Mammary epithelial cell (primary cell): ENCODE measurements at regions of chr6 and their contacts with region 1.

Region 1: DNA sequence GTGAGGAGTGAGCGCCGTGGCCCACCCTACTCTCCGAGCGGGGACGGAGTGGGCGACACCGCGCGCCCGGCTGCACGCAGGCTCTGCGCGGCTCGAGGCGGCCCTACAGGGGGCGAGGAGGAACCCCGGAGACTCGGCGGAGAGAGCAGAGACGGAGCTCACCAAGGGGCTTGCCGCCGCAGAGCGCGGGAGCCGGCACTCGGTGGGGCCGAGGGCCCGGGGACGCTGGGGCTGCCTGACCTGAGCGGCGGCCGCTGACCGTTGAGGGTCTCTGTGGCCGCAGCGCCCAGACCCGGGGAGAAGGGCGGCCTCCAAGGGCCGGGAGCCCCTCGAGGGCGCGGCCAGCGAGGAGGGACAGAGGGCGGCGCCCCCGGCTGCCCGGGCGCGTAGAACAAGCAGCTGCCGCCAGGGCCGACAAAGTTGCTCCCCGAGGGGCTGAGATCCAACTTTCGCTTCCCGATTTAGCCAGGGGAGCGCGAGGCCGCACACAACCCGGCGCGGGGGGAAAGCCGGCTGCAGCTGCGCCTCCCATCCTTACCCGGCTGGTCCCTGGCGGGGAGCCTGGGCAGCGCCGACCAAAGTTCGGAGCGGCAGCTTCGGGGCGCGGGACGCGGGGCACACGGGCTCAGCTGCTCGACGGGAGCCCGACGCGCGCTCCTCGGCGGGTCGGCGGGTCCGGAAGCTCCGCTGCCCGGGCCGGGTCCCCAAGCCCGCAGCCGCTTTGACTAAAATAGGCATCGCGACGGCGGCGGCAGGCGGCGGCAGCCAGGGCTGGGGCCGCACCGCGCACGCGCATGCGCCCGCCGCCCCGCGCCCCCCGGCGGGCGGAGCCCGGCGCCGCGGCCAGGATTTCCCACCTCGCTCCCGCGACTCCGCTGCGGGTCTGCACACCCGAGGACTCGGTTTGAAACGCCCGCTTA is 43.1 kb downstream of the POPDC3 start:
- DNase-seq: peak; percentile 55
- H3K4me3 ChIP-seq: peak overlapping the region; percentile 85 to 98 (median 93)
- H3K27ac ChIP-seq: peak overlapping the region; percentile 53
- H3K4me1 ChIP-seq: peaks cover 7% of the 10 kb centered on the region
- H3K27me3 ChIP-seq: no peaks in the 10 kb centered on the region
- CTCF ChIP-seq: peak; percentile 5 to 30

Region 2: DNA sequence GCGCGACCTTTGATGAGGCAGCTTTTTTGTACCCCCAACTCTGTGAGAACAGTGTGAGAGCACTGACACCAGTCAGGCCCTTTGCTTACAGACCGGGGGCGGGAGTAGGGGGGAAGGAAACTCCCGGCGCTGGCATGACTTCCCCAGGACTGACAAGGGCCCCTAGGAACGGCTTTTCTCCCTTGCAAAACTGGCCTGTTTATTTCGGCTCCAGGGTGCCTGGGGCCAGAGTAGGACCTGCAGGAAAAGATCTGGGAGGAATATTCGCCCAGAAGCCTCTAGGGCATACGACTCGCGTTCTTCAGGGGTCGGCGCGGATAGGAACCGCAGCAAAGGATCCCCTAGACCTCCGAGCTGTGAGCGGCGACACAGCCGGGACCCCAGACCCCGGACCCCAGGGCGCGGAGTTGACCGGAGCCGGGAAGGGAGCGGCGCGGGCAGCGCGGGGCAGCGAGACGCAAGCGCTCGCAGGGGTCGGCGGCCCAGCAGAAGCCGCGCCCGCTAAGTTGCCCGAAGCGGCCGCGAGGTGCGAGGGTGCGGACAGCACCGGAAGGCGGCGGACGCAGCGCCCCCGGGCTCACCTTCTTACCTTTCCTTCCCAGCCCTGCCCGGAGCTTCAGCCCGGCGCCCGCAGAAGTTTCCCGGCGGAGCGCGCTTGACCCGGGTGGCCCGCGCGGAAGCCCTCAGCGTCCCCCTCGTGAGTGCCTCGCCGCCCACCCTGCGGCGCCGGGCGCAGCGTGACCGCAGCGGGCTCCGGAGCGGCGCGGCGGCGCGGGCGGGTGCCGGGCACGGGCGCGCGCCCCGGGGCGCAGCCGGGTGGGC is 42.8 kb after region 1 on chr6 and contains the start of gene POPDC3:
- CTCF ChIA-PET with region 1: no interaction called
- dilution Hi-C with region 1: no loop called
- in situ Hi-C with region 1: no loop called
- intact Hi-C with region 1: loop called (anchors 2 kb)
- DNase-seq: peak; percentile 57
- H3K4me3 ChIP-seq: peak within 1 kb of the TSS; percentile 57 to 76 (median 68)
- H3K27ac ChIP-seq: peak within 1 kb of the TSS; percentile 87
- H3K4me1 ChIP-seq: peaks cover 10% of the 10 kb centered on the region
- H3K27me3 ChIP-seq: no peaks in the 10 kb centered on the region
- CTCF ChIP-seq: no peak
- total RNA-seq, gene POPDC3: 14.4 to 34.0 TPM

Region 3: DNA sequence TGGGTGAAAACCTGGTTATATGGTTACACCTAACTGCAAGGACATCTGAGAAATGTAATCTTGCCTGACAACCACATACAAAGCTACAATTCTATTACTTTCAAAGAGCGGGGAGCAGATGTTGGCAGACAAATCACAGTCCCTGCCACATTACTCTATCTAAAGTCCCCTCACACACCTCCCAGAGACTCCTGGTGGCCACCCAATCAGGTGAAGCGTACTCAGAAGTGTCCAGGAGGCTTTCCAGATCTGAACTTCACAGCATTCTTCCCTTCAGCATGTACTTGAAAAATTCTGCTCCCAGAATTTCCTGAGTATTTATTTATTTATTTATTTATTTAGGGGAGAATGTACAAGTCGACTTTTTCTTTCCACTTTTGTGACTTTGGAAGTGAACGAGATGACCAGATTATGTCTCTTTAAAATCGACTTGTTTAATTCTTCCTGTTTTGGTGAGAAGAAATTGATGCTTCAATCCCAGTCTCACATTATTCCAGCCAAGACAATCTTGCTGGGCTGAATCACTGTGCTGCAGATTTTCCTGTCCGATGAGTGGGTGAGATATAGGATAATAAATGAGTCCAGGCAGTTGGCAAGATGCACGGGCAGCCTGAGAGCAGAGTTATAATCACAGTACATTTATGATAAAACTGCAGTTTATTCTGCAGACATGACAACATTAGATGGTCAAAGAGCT is 90.1 kb after region 1 on chr6:
- CTCF ChIA-PET with region 1: no interaction called
- dilution Hi-C with region 1: no loop called
- in situ Hi-C with region 1: no loop called
- intact Hi-C with region 1: no loop called
- DNase-seq: no peak
- H3K4me3 ChIP-seq: no peak overlapping the region
- H3K27ac ChIP-seq: no peak overlapping the region
- H3K4me1 ChIP-seq: no peaks in the 10 kb centered on the region
- H3K27me3 ChIP-seq: no peaks in the 10 kb centered on the region
- CTCF ChIP-seq: no peak

Region 4: DNA sequence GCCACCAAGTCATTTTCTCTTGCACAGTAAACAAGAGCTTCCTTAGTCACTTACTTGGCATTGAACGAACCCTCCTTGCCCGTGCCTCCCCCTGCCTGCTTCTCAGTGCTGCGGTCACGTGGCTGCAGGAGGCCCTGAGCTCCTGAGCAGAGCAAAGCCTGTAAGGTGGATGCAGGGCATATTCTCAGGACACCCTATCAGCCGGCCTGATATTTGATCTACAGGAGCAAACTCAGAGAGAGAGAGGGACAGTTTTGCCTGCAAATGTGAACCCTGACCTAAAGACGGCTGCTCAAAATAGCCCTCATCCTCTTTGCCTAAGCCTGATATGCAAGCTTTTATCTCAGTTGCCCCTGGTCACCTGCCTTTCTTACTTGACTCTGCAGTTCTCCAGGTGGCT is 136.1 kb after region 1 on chr6:
- CTCF ChIA-PET with region 1: no interaction called
- dilution Hi-C with region 1: no loop called
- in situ Hi-C with region 1: no loop called
- intact Hi-C with region 1: loop called (anchors 1 kb)
- DNase-seq: no peak
- H3K4me3 ChIP-seq: no peak overlapping the region
- H3K27ac ChIP-seq: no peak overlapping the region
- H3K4me1 ChIP-seq: no peaks in the 10 kb centered on the region
- H3K27me3 ChIP-seq: no peaks in the 10 kb centered on the region
- CTCF ChIP-seq: no peak

Region 5: DNA sequence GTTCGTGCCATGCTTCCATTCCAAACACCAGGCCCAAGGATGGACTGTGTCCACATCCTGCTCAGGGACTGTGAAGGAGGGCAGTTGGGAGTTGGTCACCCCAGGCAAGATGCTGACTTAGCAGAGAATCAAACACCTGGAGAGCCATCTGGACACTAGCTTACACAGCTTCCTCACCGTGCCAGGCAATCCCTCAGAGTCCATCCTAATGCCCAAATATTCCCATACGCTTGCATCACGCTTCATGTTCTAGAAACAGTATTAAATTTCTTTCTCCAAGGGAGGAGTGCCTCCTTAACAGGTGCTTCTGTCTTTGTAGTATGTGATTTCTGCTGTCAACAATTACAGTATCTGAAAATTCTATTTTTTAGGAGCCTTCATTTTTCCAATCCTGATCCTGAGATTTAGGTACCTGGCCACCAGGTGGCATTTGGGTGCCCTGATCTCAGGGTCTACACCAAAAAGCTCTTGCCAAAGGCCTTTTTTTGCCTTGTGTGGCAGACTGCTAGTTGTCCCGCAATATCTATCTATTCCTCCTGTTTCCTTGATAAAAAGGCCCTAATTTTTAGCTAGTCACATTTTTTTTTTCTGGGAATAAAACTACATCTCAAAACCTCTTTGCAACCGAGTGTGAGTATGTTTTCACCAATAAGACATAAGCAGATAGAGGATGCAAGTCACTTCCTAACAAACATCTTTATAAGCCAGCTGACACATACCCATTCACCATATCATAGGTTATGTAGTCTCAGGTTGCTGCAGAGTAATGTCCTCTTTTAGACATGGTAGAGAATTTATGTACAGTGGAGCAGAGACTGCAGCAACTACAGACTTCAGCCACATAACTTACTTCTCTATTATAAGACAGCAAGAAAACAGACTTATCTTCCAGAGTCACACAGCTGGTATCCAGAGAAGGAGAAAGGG is 181.2 kb after region 1 on chr6:
- CTCF ChIA-PET with region 1: no interaction called
- dilution Hi-C with region 1: no loop called
- in situ Hi-C with region 1: no loop called
- intact Hi-C with region 1: loop called (anchors 5 kb)
- DNase-seq: no peak
- H3K4me3 ChIP-seq: no peak overlapping the region
- H3K27ac ChIP-seq: peak overlapping the region; percentile 45
- H3K4me1 ChIP-seq: peaks cover 29% of the 10 kb centered on the region
- H3K27me3 ChIP-seq: no peaks in the 10 kb centered on the region
- CTCF ChIP-seq: peak; percentile 36 to 62

Region 6: GRCh38 chr6:105363100-105363754 is 226.5 kb after region 1 on chr6:
- CTCF ChIA-PET with region 1: no interaction called
- dilution Hi-C with region 1: no loop called
- in situ Hi-C with region 1: no loop called
- intact Hi-C with region 1: loop called (anchors 1 kb)
- DNase-seq: peak; percentile 33
- H3K4me3 ChIP-seq: no peak overlapping the region
- H3K27ac ChIP-seq: peak overlapping the region; percentile 94
- H3K4me1 ChIP-seq: peaks cover 58% of the 10 kb centered on the region
- H3K27me3 ChIP-seq: no peaks in the 10 kb centered on the region
- CTCF ChIP-seq: peak; percentile 32 to 49

Region 7: DNA sequence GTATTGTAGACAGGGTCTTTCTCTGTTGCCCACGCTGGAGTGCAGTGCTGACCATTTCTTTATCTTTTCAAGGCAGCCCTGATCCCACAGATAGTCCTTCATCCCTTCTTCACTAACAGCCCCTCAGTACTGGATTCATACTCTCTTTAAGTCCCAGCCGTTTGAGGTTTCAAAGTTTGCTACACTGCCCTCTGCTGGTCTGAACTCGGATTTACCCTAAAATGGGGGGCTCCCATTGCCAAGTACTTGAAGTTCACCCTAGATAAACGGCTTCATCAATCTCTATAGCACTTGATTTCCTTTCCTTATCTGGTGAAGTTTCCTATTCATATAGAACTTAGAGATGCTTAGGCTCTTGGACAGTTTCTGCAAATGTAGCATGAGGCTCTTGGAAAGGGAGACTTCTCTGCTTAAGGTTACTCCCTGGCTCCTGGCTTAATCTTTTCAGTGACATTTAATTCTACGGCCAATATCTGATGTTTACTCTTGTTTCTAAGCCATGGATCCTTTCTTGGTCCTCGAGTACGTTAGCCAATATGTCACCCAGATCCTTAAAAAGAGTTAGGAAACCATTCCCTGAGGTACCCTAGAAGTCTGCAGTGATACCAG is 287.6 kb after region 1 on chr6:
- CTCF ChIA-PET with region 1: no interaction called
- dilution Hi-C with region 1: no loop called
- in situ Hi-C with region 1: no loop called
- intact Hi-C with region 1: loop called (anchors 1 kb)
- DNase-seq: peak; percentile 31
- H3K4me3 ChIP-seq: no peak overlapping the region
- H3K27ac ChIP-seq: no peak overlapping the region
- H3K4me1 ChIP-seq: peaks cover 16% of the 10 kb centered on the region
- H3K27me3 ChIP-seq: no peaks in the 10 kb centered on the region
- CTCF ChIP-seq: peak; percentile 52 to 75